ENCODE measurements at regions of chr12 and their contacts with region 1.

Region 1: DNA sequence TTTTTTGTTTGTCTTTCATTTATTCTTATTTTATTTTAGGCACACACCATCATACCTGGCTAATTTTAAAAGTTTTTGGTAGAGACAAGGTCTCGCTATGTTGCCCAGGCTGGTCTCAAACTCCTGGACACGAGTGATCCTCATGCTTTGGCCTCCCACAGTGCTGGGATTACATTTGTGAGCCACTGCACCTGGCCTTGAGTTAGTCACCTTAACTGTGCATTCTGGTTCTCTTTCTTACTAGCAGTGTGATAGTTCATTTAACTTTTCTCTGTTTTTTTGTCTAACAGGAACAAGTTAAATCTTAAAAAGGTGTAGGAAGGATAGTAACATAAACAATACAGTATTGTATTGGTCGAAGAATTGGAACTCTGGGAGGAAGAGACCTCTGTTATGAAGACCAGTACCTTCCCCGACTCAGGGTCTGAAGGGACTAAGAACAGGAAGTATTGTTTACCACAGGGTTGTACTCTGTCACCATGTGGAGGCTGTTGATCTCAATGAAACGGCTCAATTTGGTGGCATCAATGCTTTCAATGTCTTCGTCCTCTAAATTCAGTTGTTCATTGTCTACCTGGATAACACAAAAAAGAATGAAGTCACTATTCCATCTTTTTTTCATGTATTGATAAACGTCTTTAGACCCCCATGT is 17.7 kb downstream of the ERP27 start:
- DNase-seq: peak in 1 of 9 donors; percentile 29
- ATAC-seq: peak; percentile 80
- H3K4me3 ChIP-seq: no peak overlapping the region
- H3K4me3 Mint-ChIP-seq: peak overlapping the region in 8 of 10 donors; percentile 14 to 59 (median 38)
- H3K27ac ChIP-seq: peak overlapping the region; percentile 1
- H3K27ac Mint-ChIP-seq: peak overlapping the region; percentile 19 to 86 (median 76)
- H3K4me1 ChIP-seq: peaks cover 6 to 19% of the 10 kb centered on the region in 2 donors
- H3K4me1 Mint-ChIP-seq: peaks cover 18 to 38% (median 32%) of the 10 kb centered on the region in 7 donors
- H3K27me3 ChIP-seq: no peaks in the 10 kb centered on the region
- H3K27me3 Mint-ChIP-seq: no peaks in the 10 kb centered on the region

Region 2: GRCh38 chr12:13839365-13840336 is 1081.0 kb before region 1 on chr12:
- CTCF ChIA-PET with region 1: no interaction called
- POLR2A ChIA-PET with region 1: no interaction called
- intact Hi-C with region 1: no loop called
- DNase-seq: no peak
- ATAC-seq: no peak
- H3K4me3 ChIP-seq: no peak overlapping the region
- H3K4me3 Mint-ChIP-seq: no peak overlapping the region
- H3K27ac ChIP-seq: no peak overlapping the region
- H3K27ac Mint-ChIP-seq: no peak overlapping the region
- H3K4me1 ChIP-seq: no peaks in the 10 kb centered on the region
- H3K4me1 Mint-ChIP-seq: no peaks in the 10 kb centered on the region
- H3K27me3 ChIP-seq: no peaks in the 10 kb centered on the region
- H3K27me3 Mint-ChIP-seq: peaks cover 0 to 31% (median 5%) of the 10 kb centered on the region in 5 donors

Region 3: DNA sequence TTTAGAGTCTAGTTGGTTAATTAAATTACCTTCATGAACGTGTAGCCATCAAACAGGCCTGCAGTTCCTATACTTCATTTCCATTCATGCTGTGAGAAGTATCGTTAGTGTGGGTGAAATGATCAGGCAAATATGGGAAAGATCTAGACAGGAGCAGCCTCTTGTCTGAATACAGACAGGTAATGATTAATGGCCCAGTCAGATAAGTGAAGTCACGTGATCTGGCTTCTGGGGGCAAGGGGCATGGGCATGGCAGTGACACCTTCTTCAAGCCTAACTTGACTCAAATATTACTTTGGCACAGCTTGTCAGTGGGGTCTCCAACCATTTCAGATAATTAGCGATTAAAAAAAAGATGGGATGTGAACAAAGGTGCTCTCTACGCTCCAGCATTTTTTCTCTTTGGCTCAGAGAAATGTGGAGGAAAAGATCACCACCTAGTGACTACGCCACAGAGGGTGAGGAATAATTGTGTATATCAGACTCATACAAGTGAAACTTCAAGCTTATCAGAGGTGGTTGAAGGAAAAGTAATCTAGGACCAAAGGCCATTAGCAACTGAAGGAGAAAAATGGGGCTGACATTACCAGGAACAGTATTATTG is 242.0 kb before region 1 on chr12:
- CTCF ChIA-PET with region 1: no interaction called
- POLR2A ChIA-PET with region 1: no interaction called
- intact Hi-C with region 1: no loop called
- DNase-seq: no peak
- ATAC-seq: no peak
- H3K4me3 ChIP-seq: no peak overlapping the region
- H3K4me3 Mint-ChIP-seq: no peak overlapping the region
- H3K27ac ChIP-seq: no peak overlapping the region
- H3K27ac Mint-ChIP-seq: no peak overlapping the region
- H3K4me1 ChIP-seq: no peaks in the 10 kb centered on the region
- H3K4me1 Mint-ChIP-seq: peaks cover 0 to 4% (median 0%) of the 10 kb centered on the region in 7 donors
- H3K27me3 ChIP-seq: peaks cover 0 to 2% of the 10 kb centered on the region in 2 donors
- H3K27me3 Mint-ChIP-seq: peaks cover 0 to 23% (median 16%) of the 10 kb centered on the region in 5 donors

Region 4: GRCh38 chr12:14896521-14897169 is 24.0 kb before region 1 on chr12:
- CTCF ChIA-PET with region 1: interaction called, 3 read pairs
- POLR2A ChIA-PET with region 1: interaction called, 3 read pairs
- intact Hi-C with region 1: loop called in 1 of 2 experiments (anchors 2 kb)
- DNase-seq: no peak
- ATAC-seq: no peak
- H3K4me3 ChIP-seq: no peak overlapping the region
- H3K4me3 Mint-ChIP-seq: no peak overlapping the region
- H3K27ac ChIP-seq: no peak overlapping the region
- H3K27ac Mint-ChIP-seq: no peak overlapping the region
- H3K4me1 ChIP-seq: no peaks in the 10 kb centered on the region
- H3K4me1 Mint-ChIP-seq: peaks cover 0 to 10% (median 3%) of the 10 kb centered on the region in 7 donors
- H3K27me3 ChIP-seq: no peaks in the 10 kb centered on the region
- H3K27me3 Mint-ChIP-seq: no peaks in the 10 kb centered on the region

Region 5: GRCh38 chr12:14937689-14938088 is 17.1 kb after region 1 on chr12:
- CTCF ChIA-PET with region 1: interaction called, 3 read pairs
- POLR2A ChIA-PET with region 1: interaction called, 14 read pairs
- intact Hi-C with region 1: loop called (anchors 2 kb)
- DNase-seq: no peak
- ATAC-seq: peak; percentile 57
- H3K4me3 ChIP-seq: no peak overlapping the region
- H3K4me3 Mint-ChIP-seq: peak overlapping the region in 5 of 10 donors; percentile 3 to 59 (median 25)
- H3K27ac ChIP-seq: peak overlapping the region; percentile 36
- H3K27ac Mint-ChIP-seq: peak overlapping the region; percentile 56 to 94 (median 84)
- H3K4me1 ChIP-seq: peaks cover 0 to 22% of the 10 kb centered on the region in 2 donors
- H3K4me1 Mint-ChIP-seq: peaks cover 34 to 81% (median 69%) of the 10 kb centered on the region in 7 donors
- H3K27me3 ChIP-seq: no peaks in the 10 kb centered on the region
- H3K27me3 Mint-ChIP-seq: no peaks in the 10 kb centered on the region

Region 6: DNA sequence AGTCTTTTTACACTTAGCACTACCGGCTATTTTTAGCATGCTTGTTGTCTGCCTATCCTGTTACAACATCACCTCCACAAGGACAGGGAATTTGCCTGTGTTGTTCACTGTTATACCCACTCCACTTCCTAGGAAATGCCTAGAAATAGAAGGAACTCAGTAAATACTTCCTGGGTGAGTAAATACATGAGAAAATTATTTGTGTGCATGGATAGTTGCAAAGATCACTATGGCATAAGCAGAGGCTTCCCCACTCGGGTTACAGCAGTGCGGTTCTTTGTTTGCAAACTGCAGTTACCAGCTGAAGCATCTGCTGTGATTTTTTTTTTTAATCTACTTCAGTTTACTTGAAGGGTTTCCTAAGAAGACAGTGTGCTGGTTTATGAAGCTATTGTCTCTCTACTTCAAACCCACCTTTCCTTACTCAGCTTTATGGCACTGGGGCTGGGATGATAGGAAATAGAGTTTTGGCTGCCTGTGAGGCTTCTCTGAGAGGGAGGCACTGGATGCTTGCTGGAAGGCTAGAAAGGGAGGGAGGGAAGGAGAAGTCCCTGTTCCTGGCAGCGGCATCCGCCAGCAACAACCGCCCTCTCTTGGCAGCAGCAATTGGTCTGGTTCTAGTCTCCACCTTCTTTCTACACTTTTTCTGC is 81.3 kb after region 1 on chr12:
- CTCF ChIA-PET with region 1: no interaction called
- POLR2A ChIA-PET with region 1: no interaction called
- intact Hi-C with region 1: no loop called
- DNase-seq: no peak
- ATAC-seq: no peak
- H3K4me3 ChIP-seq: no peak overlapping the region
- H3K4me3 Mint-ChIP-seq: no peak overlapping the region
- H3K27ac ChIP-seq: no peak overlapping the region
- H3K27ac Mint-ChIP-seq: no peak overlapping the region
- H3K4me1 ChIP-seq: no peaks in the 10 kb centered on the region
- H3K4me1 Mint-ChIP-seq: no peaks in the 10 kb centered on the region
- H3K27me3 ChIP-seq: peaks cover 0 to 4% of the 10 kb centered on the region in 2 donors
- H3K27me3 Mint-ChIP-seq: peaks cover 9 to 82% (median 26%) of the 10 kb centered on the region in 5 donors

Region 7: DNA sequence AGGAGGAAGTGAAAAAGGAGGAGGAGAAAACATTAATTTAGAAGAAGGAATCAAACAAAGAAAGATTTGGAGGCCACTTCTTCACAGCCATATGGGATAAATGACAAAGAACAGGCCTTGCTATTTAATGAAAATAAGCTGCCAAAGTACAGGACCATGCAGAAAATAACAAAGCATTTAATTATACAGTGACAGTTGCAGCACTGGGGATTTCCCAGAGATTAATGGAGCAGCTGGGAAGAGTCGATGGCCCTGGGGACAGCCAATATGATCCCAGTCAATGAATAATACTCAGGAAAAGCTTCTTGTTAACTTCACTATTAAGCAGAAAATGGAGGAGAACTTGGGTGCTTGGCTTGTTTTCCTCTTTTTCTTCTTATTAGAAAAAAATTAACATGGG is 266.0 kb after region 1 on chr12:
- CTCF ChIA-PET with region 1: no interaction called
- POLR2A ChIA-PET with region 1: no interaction called
- intact Hi-C with region 1: no loop called
- DNase-seq: no peak
- ATAC-seq: no peak
- H3K4me3 ChIP-seq: no peak overlapping the region
- H3K4me3 Mint-ChIP-seq: no peak overlapping the region
- H3K27ac ChIP-seq: no peak overlapping the region
- H3K27ac Mint-ChIP-seq: no peak overlapping the region
- H3K4me1 ChIP-seq: no peaks in the 10 kb centered on the region
- H3K4me1 Mint-ChIP-seq: no peaks in the 10 kb centered on the region
- H3K27me3 ChIP-seq: no peaks in the 10 kb centered on the region
- H3K27me3 Mint-ChIP-seq: peaks cover 0 to 13% (median 4%) of the 10 kb centered on the region in 5 donors